HEK293 (cell line): ENCODE measurements at regions of chr6 and their contacts with region 1.

Region 1: GRCh38 chr6:41027799-41028628 is 11.0 kb downstream of the UNC5CL start:
- H3K4me3 ChIP-seq: peak overlapping the region; percentile 41
- H3K27ac ChIP-seq: no peak overlapping the region; the same call in 1 of the 2 replicates
- H3K4me1 ChIP-seq: peaks cover 2% of the 10 kb centered on the region
- CTCF ChIP-seq: peak; percentile 98

Region 2: GRCh38 chr6:40900791-40901190 is 127.2 kb before region 1 on chr6:
- CTCF ChIA-PET with region 1: interaction called, 145 read pairs
- POLR2A ChIA-PET with region 1: interaction called, 3 read pairs
- H3K4me3 ChIP-seq: no peak overlapping the region
- H3K27ac ChIP-seq: no peak overlapping the region
- H3K4me1 ChIP-seq: no peaks in the 10 kb centered on the region
- CTCF ChIP-seq: no peak

Region 3: GRCh38 chr6:41008011-41008410 is 20.0 kb before region 1 on chr6:
- CTCF ChIA-PET with region 1: interaction called, 35 read pairs
- POLR2A ChIA-PET with region 1: no interaction called
- H3K4me3 ChIP-seq: no peak overlapping the region
- H3K27ac ChIP-seq: no peak overlapping the region
- H3K4me1 ChIP-seq: no peaks in the 10 kb centered on the region
- CTCF ChIP-seq: no peak

Region 4: GRCh38 chr6:41039060-41039998 is 11.3 kb after region 1 on chr6 and contains the start of gene UNC5CL:
- CTCF ChIA-PET with region 1: interaction called, 146 read pairs
- POLR2A ChIA-PET with region 1: interaction called, 3 read pairs
- H3K4me3 ChIP-seq: no peak within 1 kb of the TSS
- H3K27ac ChIP-seq: no peak within 1 kb of the TSS
- H3K4me1 ChIP-seq: no peaks in the 10 kb centered on the region
- CTCF ChIP-seq: no peak

Region 5: DNA sequence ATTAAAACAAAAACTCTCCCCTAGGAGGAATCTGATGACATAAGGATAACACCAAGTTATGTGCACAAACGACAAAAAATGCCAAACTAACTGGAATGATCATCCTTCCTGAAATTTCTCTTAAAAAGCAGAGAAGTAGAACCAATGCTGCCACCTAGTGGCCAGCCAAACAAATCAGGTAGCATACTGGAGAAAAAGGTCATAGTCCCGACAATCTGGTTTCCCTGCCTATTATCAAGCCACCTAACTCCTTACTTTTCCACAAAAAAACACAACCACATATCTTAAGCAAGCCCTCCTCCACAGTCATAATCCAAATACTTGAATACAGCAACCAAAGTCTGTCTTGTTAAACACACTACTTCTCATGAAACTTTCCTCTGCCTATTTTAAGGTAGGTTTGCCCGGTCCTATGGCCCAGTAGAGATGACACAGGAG is 38.9 kb after region 1 on chr6:
- CTCF ChIA-PET with region 1: interaction called, 13 read pairs
- POLR2A ChIA-PET with region 1: interaction called, 3 read pairs
- H3K4me3 ChIP-seq: no peak overlapping the region
- H3K27ac ChIP-seq: no peak overlapping the region
- H3K4me1 ChIP-seq: no peaks in the 10 kb centered on the region
- CTCF ChIP-seq: peak; percentile 58